GM18951 (cell line): ENCODE measurements at regions of chr3 and their contacts with region 1.

Region 1: DNA sequence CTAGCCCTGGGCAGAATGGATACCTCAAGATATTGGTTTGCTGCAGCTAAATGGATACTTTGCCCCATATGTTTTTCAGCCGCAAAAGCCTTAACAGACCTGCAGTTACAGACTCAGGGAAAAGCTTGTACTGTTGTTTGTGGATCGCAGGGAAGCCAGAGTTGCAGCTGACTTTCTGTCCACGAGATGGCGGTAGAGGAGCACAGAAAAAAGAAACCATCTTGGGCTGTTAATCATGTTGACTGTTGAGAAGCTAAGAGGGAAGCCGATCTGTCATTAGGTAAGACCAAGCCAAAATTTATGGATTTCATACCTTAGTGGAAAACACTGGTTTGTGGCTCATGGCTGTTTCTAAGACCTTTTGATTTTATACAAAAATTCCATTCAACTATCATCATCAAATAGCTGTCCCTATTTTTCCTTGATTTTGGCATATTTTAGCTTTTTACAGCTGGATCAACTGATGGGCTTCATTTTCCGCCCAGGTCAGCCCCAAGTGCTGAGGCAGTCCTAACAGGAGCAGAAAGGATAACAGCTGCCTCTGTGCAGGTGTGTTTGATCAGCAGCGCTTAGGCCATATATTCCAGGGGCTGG is 205.7 kb upstream of the ZPLD1 start:
- POLR2A ChIP-seq: no peak

Region 2: GRCh38 chr3:101695779-101696372 is 533.3 kb before region 1 on chr3:
- in situ Hi-C with region 1: loop called (anchors 10 kb)
- POLR2A ChIP-seq: no peak

Region 3: DNA sequence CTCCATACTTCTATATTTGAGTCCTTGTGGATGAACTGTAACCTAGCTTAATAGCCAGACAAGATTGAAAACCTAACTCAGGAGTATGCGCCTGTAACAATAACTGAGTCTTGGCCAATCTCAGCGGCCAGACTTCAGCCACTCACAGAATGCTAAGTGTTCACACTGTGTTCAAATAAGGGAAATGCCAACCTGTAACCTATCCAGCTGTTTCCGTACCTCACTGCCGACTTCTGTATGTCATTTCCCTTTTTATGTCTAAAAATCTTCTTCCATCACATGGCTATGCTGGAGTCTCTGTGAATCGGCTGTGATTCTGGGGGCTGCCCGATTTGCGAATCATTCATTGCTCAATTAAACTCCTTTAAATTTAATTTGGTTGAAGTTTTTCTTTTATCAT is 210.6 kb before region 1 on chr3:
- in situ Hi-C with region 1: no loop called
- POLR2A ChIP-seq: no peak

Region 4: DNA sequence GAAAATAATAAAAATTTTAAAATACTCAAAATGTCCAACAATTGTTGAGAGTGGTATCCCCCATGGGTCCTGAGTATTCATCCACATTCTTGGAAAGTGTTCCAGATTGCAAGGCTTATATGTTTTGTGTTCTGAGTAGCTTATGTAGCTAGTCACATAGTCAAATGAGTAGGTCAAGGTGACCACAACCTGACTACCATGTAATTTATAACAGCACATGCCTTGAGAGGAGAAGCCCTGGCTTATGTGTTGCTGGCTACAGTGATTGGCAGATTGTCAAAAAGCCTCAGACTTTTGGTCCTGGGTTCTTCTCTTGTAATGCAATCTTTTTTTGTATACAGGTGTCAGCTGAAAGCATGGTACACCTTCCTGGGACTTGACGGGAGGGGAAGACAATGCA is 95.3 kb after region 1 on chr3:
- in situ Hi-C with region 1: no loop called
- POLR2A ChIP-seq: no peak

Region 5: GRCh38 chr3:102536456-102536855 is 307.3 kb after region 1 on chr3:
- in situ Hi-C with region 1: loop called (anchors 5 kb)
- POLR2A ChIP-seq: no peak